Left lung (tissue), 14 donors: ENCODE measurements at regions of chr4 and their contacts with region 1.

Region 1: DNA sequence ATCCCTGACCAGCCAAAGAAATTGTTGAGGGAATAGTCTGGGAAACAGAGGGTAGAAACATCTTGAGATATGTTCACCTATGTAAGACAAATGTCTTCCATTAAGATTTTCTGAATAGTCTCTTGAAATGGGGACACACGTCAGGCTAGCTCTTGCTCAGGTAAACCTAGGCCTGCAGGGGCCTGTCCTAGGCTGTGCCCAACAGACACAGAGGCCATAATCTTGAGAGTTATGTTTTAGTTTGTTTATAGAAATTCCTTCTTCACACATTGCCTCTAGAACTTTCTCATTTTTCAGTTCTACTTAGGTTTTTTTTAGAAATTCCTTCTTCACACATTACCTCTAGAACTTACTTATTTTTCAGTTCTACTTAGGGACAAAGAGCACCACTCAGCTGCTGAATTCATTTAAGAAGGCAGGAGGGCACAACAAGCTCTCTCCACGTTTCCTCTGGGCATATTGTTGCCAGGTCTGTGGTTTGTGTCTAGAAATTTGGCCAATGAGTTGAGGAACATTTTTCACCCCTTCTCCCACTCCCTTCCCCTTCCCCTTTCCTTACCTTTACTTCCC is 94.9 kb downstream of the ARHGAP24 start:
- DNase-seq: no peak
- ATAC-seq: no peak
- H3K4me3 ChIP-seq: no peak overlapping the region
- H3K27ac ChIP-seq: no peak overlapping the region
- H3K4me1 ChIP-seq: no peaks in the 10 kb centered on the region
- H3K27me3 ChIP-seq: no peaks in the 10 kb centered on the region
- CTCF ChIP-seq: no peak

Region 2: DNA sequence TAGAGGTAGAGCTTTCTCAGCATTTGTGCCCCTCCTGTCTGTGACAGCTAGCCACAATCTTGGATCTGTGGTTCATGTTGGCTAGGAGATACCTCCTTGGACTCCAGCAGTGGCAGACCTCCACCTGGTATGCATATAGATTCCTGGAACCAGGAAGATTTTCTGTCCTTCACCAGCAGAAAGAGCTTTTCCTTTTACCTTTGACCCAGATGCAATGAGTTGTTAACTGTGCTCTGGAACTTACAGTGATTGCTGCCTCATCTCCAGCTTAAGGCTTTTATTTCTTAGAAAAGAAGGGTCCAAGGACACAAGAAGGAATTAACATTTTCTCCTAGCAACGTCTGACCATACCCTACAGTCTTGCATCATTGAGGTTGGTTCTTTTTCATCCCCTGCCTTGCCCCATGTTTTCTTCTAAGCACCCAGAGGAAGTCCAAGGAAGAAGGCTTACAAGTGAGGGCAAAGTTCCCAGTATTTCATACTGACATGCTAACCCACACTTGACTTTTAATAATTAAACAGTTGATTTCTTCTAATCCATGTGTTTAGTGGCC is 311.9 kb before region 1 on chr4:
- intact Hi-C with region 1: loop called in 1 of 2 experiments (anchors 10 kb)
- DNase-seq: no peak
- ATAC-seq: no peak
- H3K4me3 ChIP-seq: no peak overlapping the region
- H3K27ac ChIP-seq: no peak overlapping the region
- H3K4me1 ChIP-seq: no peaks in the 10 kb centered on the region
- H3K27me3 ChIP-seq: no peaks in the 10 kb centered on the region
- CTCF ChIP-seq: no peak